Activated CD8-positive, alpha-beta T cell treated with anti-CD3 and anti-CD28 coated beads for 36 hours (primary cell): ENCODE measurements at regions of chrX and their contacts with region 1.

Region 1: GRCh38 chrX:11533211-11533651 is 132.5 kb downstream of the ARHGAP6 start:
- DNase-seq: no peak
- ATAC-seq: peak; percentile 98
- H3K4me3 Mint-ChIP-seq: no peak overlapping the region
- H3K27ac Mint-ChIP-seq: no peak overlapping the region
- H3K4me1 Mint-ChIP-seq: no peaks in the 10 kb centered on the region
- H3K27me3 Mint-ChIP-seq: peaks cover 2% of the 10 kb centered on the region
- CTCF ChIP-seq: peak; percentile 74

Region 2: DNA sequence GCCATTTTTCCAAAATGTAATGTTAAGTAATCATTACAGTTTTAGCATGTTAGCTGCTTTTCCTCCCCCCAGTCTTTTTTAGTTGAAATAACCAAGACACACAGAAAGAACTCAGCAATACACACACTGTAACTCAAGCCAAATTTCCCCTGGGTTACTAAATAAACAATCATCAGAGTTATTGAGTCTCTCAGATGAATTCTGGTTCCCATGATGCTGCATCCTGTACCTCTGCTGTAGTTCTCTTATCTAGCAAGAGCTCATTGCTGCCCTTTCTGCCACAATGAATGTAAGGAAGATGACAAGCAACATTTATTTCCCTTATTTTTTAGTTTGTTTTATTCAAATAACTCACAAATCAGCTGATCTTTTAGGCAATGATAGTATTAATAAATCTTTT is 52.6 kb before region 1 on chrX:
- CTCF ChIA-PET with region 1: no interaction called
- POLR2A ChIA-PET with region 1: no interaction called
- intact Hi-C with region 1: no loop called
- DNase-seq: no peak
- ATAC-seq: no peak
- H3K4me3 Mint-ChIP-seq: no peak overlapping the region
- H3K27ac Mint-ChIP-seq: no peak overlapping the region
- H3K4me1 Mint-ChIP-seq: no peaks in the 10 kb centered on the region
- H3K27me3 Mint-ChIP-seq: peaks cover 8% of the 10 kb centered on the region
- CTCF ChIP-seq: no peak

Region 3: DNA sequence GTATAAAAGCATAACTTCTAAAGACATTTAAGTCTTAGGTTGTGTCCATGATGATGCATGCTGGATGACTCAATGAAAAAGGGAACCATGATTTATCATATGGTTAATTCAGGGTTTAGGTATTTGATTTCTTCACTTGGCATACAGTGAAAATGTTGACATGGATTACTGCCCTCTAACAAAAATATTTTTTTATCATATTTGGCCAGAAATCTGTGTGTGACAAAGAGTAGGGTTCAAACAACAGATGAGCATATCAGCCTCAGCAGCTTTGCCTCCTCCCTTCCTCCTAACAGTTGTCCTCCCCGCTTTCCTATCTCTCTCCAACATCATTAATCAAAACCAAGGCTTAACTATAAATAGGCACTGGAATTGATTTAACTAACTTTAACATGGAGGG is 86.2 kb after region 1 on chrX:
- CTCF ChIA-PET with region 1: no interaction called
- POLR2A ChIA-PET with region 1: no interaction called
- intact Hi-C with region 1: no loop called
- DNase-seq: no peak
- ATAC-seq: no peak
- H3K4me3 Mint-ChIP-seq: no peak overlapping the region
- H3K27ac Mint-ChIP-seq: no peak overlapping the region
- H3K4me1 Mint-ChIP-seq: no peaks in the 10 kb centered on the region
- H3K27me3 Mint-ChIP-seq: peaks cover 5% of the 10 kb centered on the region
- CTCF ChIP-seq: no peak

Region 4: DNA sequence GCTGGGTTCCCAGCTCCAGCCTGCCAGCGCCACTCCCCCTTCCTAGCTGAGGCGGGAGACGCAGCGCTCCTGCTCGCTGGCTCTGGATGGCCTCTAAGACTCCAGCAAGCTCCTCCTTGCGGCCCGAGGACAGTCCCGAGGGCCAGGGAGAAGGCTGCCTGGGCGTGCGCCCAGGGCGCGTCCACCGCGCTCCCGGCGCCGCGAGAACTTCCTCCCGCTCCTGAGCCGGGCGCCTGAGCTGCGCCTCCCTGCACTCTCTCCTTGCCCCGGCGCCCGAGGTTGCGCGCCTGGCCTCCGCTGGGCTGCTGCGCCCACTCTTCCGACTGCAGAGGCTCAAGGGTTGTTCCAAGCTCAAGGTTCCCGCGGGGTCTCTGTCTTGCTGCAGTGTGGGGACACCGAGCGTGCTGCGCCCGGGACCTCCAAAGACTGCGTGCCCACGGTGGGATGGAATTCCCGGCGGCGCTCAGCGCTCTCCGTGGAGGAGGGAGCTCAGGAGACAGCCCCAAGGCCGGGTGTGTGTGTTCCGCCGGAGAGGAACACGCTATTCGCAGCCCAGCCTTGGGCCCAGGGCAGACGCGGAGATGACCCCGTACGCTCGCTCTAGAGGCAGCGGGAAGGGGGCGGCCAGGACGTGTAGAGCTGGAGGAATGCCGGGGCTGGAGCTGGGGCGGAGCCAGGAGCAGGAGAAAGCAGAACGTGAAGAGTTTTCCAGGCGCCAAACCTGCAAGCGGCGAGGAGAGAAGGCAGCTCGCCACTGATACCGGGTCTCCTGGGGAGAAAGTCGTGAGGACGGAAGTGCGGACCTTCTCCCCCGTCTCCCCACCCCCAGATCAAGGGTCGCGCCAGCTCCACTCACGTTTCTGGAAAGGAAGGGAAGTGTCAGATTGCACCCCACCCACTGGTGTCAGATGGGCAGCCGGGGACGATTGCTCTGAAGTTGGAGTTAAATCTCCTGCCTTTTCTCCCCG is 132.2 kb after region 1 on chrX and contains the start of gene ARHGAP6:
- CTCF ChIA-PET with region 1: no interaction called
- POLR2A ChIA-PET with region 1: no interaction called
- intact Hi-C with region 1: loop called (anchors 10 kb)
- DNase-seq: no peak
- ATAC-seq: no peak
- H3K4me3 Mint-ChIP-seq: no peak within 1 kb of the TSS
- H3K27ac Mint-ChIP-seq: no peak within 1 kb of the TSS
- H3K4me1 Mint-ChIP-seq: peaks cover 2% of the 10 kb centered on the region
- H3K27me3 Mint-ChIP-seq: peaks cover 40% of the 10 kb centered on the region
- CTCF ChIP-seq: no peak
- total RNA-seq, gene ARHGAP6: not detected

Region 5: GRCh38 chrX:11724122-11725017 is 191.1 kb after region 1 on chrX:
- CTCF ChIA-PET with region 1: interaction called, 4 read pairs
- POLR2A ChIA-PET with region 1: no interaction called
- intact Hi-C with region 1: loop called (anchors 1 kb)
- DNase-seq: peak; percentile 17
- ATAC-seq: peak; percentile 56
- H3K4me3 Mint-ChIP-seq: no peak overlapping the region
- H3K27ac Mint-ChIP-seq: no peak overlapping the region
- H3K4me1 Mint-ChIP-seq: no peaks in the 10 kb centered on the region
- H3K27me3 Mint-ChIP-seq: no peaks in the 10 kb centered on the region
- CTCF ChIP-seq: peak; percentile 54

Region 6: DNA sequence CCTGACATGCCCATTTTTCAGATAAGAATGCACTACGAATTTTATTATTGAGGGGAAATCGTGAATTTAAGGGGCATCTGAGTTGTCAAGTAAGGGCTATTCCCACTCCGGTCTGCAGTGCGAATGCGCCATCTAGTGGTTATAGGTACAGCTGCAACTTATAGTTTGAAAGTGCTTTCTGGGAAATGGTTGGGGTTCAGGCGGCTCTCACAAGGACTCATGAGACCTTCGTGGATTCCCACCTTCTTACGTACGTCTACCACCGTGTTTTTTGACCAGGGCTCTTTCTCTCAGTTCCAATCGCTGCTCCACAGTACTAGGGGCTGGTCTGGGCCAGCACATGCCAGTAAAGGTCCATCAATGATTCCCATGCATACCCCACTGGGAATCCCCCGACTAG is 237.1 kb after region 1 on chrX:
- CTCF ChIA-PET with region 1: interaction called, 8 read pairs
- POLR2A ChIA-PET with region 1: no interaction called
- intact Hi-C with region 1: loop called (anchors 1 kb)
- DNase-seq: peak; percentile 69
- ATAC-seq: peak; percentile 79
- H3K4me3 Mint-ChIP-seq: peak overlapping the region; percentile 29
- H3K27ac Mint-ChIP-seq: peak overlapping the region; percentile 93
- H3K4me1 Mint-ChIP-seq: peaks cover 50% of the 10 kb centered on the region
- H3K27me3 Mint-ChIP-seq: no peaks in the 10 kb centered on the region
- CTCF ChIP-seq: peak; percentile 58